ENCODE measurements at regions of chr6 and their contacts with region 1.

Region 1: DNA sequence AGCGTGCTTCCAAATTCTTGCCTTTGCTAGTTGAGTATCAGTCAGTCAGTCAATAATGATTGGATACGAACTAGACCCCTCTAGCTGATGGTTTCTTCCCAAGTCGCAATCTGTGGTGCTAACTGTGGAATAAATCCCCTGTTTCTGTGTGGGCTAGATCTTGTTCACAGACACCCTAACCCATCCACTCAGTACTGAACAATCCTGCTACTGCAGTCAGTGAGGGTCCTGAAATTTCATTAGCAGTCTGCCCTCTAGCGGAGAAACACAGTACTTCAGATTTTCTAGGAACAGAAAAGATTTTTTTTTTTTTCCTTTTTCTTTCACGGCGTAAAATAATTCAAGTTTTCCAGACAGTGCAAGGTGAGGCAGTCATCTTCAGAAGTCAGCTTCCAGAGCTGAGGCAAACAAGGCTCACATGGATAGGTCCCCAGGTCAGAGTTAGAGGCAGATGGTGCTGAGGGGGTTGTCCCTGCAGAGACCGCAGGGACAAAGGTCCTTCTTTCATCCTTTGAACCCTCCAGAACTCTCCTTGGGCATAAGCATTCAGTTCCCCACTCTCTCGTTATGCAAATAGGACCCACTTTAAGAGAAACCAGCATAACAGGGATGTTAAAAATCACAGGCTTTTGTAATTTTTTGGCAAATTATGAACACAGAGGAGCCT is 119.6 kb downstream of the SCML4 start:
- DNase-seq: no peak
- ATAC-seq: peak; percentile 40 to 56
- H3K4me3 ChIP-seq: no peak overlapping the region
- H3K27ac ChIP-seq: no peak overlapping the region
- H3K4me1 ChIP-seq: no peaks in the 10 kb centered on the region
- H3K27me3 ChIP-seq: no peaks in the 10 kb centered on the region

Region 2: DNA sequence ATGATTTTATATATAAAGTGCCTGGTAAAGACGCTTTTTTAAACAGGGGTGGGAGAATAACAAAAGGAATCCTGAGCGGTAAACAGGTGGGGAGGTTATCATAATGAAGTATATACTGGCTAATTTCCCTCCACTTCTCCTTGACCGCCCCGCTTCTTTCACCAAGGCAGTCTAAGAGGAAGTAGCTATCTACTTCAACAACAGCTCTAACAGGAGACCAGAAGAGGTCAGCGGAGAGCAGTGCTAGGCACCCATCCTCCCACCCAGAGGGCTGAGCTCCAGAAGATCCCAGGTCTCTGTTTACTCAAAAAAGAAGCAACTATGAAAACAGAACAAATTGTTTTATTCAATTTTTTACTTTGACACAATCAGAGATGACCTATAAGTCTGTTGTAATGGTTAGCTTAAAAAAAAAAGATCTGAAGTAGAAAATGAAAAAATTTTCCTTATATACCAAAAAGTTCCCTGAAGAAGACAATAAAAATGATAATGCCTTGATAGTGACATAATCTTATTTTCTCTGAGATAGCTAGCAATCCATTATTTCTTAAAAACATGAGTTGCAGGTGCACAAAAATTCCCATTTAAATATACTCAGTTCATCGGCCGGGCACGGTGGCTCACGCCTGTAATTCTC is 386.3 kb before region 1 on chr6:
- intact Hi-C with region 1: loop called in 1 of 4 experiments (anchors 10 kb)
- DNase-seq: peak; percentile 40 to 75 (median 63)
- ATAC-seq: peak; percentile 89 to 90
- H3K4me3 ChIP-seq: no peak overlapping the region
- H3K27ac ChIP-seq: no peak overlapping the region
- H3K4me1 ChIP-seq: no peaks in the 10 kb centered on the region
- H3K27me3 ChIP-seq: no peaks in the 10 kb centered on the region

Measured in right cardiac atrium (tissue), 5 donors.